Activated B cell treated with CpG ODN at 0.5 μM for 24 hours (primary cell): ENCODE measurements at regions of chr19 and their contacts with region 1.

Region 1: DNA sequence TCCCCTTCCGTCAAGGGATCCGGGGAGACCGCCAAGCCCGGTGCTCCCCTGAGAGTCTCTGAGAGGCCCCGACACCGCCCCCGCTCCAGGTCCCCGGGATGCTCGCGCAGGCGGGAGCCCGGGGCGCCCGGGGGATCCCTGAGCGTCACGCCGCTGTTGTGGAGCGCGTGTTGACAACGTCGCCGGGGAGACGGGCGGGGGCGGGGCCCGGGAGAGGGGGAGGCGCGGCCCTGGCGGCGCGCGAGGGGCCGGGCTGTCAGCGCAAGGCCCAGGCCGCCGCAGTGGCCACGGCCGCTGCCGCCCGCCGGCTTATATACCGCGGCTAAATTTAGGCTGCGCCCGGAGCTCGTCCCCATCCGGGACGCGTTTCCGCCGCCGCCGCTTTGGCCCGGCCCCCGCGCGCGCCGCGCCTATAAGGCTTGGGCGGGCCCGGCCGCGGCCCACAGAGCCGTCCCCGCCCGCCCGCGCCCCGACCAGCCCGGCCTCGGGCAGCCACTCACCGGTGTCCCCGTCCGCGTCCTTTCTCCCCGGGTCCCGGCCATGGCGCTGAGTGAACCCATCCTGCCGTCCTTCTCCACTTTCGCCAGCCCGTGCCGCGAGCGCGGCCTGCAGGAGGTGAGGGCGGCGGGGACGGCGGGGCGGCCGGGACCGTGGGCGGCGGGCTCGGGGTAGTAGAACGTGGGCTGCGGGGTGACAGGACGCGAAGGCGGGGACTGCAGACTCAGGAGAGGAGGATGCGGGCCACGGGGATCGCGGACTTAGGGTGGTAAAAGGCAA is at the start of gene KLF2:
- DNase-seq: peak; percentile 92
- ATAC-seq: peak; percentile 63
- H3K4me3 Mint-ChIP-seq: peak within 1 kb of the TSS; percentile 77
- H3K27ac Mint-ChIP-seq: peak within 1 kb of the TSS; percentile 81
- H3K4me1 Mint-ChIP-seq: peaks cover 77% of the 10 kb centered on the region
- H3K27me3 Mint-ChIP-seq: no peaks in the 10 kb centered on the region
- CTCF ChIP-seq: no peak
- total RNA-seq, gene KLF2: 76.8 and 87.6 TPM in 2 replicates

Region 2: DNA sequence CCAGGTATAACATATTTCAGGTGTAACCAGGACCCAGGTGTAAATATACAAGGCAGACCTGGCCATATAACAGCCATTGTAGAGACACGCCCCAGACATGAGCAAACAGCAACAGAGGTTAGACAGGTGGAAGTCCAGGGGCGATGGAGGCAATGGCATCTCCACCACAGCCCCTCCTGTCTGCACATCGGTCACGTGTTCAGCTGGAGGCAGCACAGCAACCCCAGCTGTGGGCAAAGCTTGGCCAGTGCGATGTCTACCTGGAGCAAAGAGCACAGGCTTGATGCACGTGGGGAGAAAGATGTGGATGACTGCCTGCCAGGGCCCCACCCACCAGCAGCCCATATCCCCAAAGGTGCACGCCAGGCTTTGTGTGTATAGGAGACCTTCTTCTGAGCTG is 431.1 kb before region 1 on chr19:
- CTCF ChIA-PET with region 1: no interaction called
- POLR2A ChIA-PET with region 1: no interaction called
- intact Hi-C with region 1: no loop called
- DNase-seq: no peak
- ATAC-seq: no peak
- H3K4me3 Mint-ChIP-seq: no peak overlapping the region
- H3K27ac Mint-ChIP-seq: no peak overlapping the region
- H3K4me1 Mint-ChIP-seq: no peaks in the 10 kb centered on the region
- H3K27me3 Mint-ChIP-seq: peaks cover 19% of the 10 kb centered on the region
- CTCF ChIP-seq: no peak

Region 3: DNA sequence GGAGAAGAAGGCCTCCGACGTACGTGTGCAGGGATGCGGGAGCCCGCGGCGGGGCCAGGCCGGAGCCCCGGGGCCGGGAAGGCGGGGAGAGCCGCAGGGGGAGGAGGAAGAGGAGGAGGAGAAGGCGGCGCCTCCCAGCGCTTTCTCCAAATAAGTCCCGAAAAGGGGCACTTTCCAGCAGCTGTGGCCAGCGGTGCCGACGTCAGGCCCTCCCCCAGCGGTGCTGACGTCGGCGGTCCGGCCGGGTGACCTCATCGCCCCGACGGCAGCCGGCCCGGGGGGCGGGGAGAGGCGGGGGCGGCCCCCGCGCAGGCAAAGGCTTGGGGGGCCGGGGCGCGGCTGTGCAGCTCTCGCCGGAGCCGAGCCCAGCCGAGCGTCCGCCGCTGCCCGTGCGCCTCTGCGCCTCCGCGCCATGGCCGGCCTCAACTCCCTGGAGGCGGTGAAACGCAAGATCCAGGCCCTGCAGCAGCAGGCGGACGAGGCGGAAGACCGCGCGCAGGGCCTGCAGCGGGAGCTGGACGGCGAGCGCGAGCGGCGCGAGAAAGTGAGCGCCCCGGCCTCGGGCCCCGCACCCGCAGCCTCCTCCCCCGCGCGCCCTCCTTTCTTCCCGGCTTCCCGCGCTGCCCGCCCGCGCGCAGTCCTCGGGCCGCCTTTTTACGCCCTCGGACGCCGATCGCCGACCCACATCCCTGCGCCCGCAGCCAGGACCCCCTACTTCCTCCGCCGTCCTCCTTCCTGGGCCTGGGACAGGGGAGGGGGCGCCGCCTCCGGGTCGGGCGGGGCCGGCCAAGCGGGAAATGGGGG is 248.2 kb before region 1 on chr19 and contains the start of gene TPM4:
- CTCF ChIA-PET with region 1: no interaction called
- POLR2A ChIA-PET with region 1: interaction called, 4 read pairs
- intact Hi-C with region 1: loop called (anchors 10 kb)
- DNase-seq: peak; percentile 77
- ATAC-seq: peak; percentile 53
- H3K4me3 Mint-ChIP-seq: peak within 1 kb of the TSS; percentile 90
- H3K27ac Mint-ChIP-seq: peak within 1 kb of the TSS; percentile 98
- H3K4me1 Mint-ChIP-seq: peaks cover 57% of the 10 kb centered on the region
- H3K27me3 Mint-ChIP-seq: no peaks in the 10 kb centered on the region
- CTCF ChIP-seq: no peak
- total RNA-seq, gene TPM4: 238 and 257 TPM in 2 replicates

Region 4: GRCh38 chr19:16247353-16248182 is 77.0 kb before region 1 on chr19:
- CTCF ChIA-PET with region 1: interaction called, 41 read pairs
- POLR2A ChIA-PET with region 1: interaction called, 69 read pairs
- intact Hi-C with region 1: loop called (anchors 1 kb)
- DNase-seq: peak; percentile 85
- ATAC-seq: peak; percentile 88
- H3K4me3 Mint-ChIP-seq: peak overlapping the region; percentile 17
- H3K27ac Mint-ChIP-seq: peak overlapping the region; percentile 32
- H3K4me1 Mint-ChIP-seq: peaks cover 41% of the 10 kb centered on the region
- H3K27me3 Mint-ChIP-seq: no peaks in the 10 kb centered on the region
- CTCF ChIP-seq: peak; percentile 33

Region 5: GRCh38 chr19:16283210-16284061 is 41.1 kb before region 1 on chr19:
- CTCF ChIA-PET with region 1: no interaction called
- POLR2A ChIA-PET with region 1: interaction called, 15 read pairs
- intact Hi-C with region 1: no loop called
- DNase-seq: peak; percentile 41
- ATAC-seq: peak; percentile 83
- H3K4me3 Mint-ChIP-seq: peak overlapping the region; percentile 66
- H3K27ac Mint-ChIP-seq: peak overlapping the region; percentile 78
- H3K4me1 Mint-ChIP-seq: peaks cover 51% of the 10 kb centered on the region
- H3K27me3 Mint-ChIP-seq: no peaks in the 10 kb centered on the region
- CTCF ChIP-seq: no peak

Region 6: GRCh38 chr19:16371540-16371986 is 47.0 kb after region 1 on chr19:
- CTCF ChIA-PET with region 1: interaction called, 12 read pairs
- POLR2A ChIA-PET with region 1: interaction called, 828 read pairs
- intact Hi-C with region 1: loop called (anchors 1 kb)
- DNase-seq: peak; percentile 77
- ATAC-seq: peak; percentile 78
- H3K4me3 Mint-ChIP-seq: peak overlapping the region; percentile 78
- H3K27ac Mint-ChIP-seq: no peak overlapping the region
- H3K4me1 Mint-ChIP-seq: peaks cover 33% of the 10 kb centered on the region
- H3K27me3 Mint-ChIP-seq: no peaks in the 10 kb centered on the region
- CTCF ChIP-seq: no peak

Region 7: GRCh38 chr19:16417660-16418596 is 93.4 kb after region 1 on chr19:
- CTCF ChIA-PET with region 1: interaction called, 21 read pairs
- POLR2A ChIA-PET with region 1: interaction called, 66 read pairs
- intact Hi-C with region 1: loop called (anchors 1 kb)
- DNase-seq: peak; percentile 80
- ATAC-seq: peak; percentile 92
- H3K4me3 Mint-ChIP-seq: peak overlapping the region; percentile 61
- H3K27ac Mint-ChIP-seq: peak overlapping the region; percentile 83
- H3K4me1 Mint-ChIP-seq: peaks cover 37% of the 10 kb centered on the region
- H3K27me3 Mint-ChIP-seq: no peaks in the 10 kb centered on the region
- CTCF ChIP-seq: peak; percentile 87